ENCODE measurements at regions of chr2 and their contacts with region 1.

Region 1: GRCh38 chr2:43226558-43226954 is at the start of gene ZFP36L2:
- DNase-seq: peak; percentile 97
- H3K4me3 ChIP-seq: peak within 1 kb of the TSS; percentile 98
- H3K27ac ChIP-seq: peak within 1 kb of the TSS; percentile 98
- H3K4me1 ChIP-seq: peaks cover 39% of the 10 kb centered on the region
- H3K27me3 ChIP-seq: no peaks in the 10 kb centered on the region
- CTCF ChIP-seq: no peak
- total RNA-seq, gene ZFP36L2: 20.4 and 23.4 TPM in 2 replicates

Region 2: DNA sequence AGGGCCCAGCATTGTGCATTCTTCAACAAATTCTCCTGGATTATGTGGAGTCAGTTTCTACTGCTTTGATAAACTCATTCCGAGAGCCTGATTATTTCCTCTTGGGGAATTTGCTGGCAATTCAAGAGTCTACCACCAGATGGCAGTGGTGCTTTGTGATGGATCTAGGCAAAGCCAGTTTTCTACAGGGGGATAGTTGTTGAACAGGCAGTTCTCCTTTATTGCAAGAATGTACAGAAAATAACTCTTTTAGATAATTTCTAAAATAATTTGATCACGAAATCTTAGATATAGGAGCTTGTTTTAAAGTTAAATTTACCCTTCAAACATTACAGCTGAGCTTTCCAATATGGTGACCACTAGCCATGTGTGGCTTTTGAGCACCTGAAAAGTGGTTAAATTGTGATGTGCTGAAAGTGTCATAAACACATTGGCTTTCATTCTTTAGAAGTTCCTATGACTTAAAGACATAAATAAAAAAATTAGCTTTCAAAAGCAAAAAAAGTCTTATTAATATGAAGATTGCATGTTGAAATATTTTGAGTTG is 367.5 kb before region 1 on chr2:
- CTCF ChIA-PET with region 1: no interaction called
- POLR2A ChIA-PET with region 1: no interaction called
- intact Hi-C with region 1: loop called (anchors 10 kb)
- DNase-seq: peak; percentile 84
- H3K4me3 ChIP-seq: no peak overlapping the region
- H3K27ac ChIP-seq: no peak overlapping the region
- H3K4me1 ChIP-seq: no peaks in the 10 kb centered on the region
- H3K27me3 ChIP-seq: no peaks in the 10 kb centered on the region
- CTCF ChIP-seq: peak; percentile 94

Region 3: GRCh38 chr2:42974721-42975717 is 251.5 kb before region 1 on chr2:
- CTCF ChIA-PET with region 1: interaction called, 14 read pairs
- POLR2A ChIA-PET with region 1: no interaction called
- intact Hi-C with region 1: loop called (anchors 1 kb)
- DNase-seq: peak; percentile 76
- H3K4me3 ChIP-seq: peak overlapping the region; percentile 41
- H3K27ac ChIP-seq: no peak overlapping the region
- H3K4me1 ChIP-seq: no peaks in the 10 kb centered on the region
- H3K27me3 ChIP-seq: no peaks in the 10 kb centered on the region
- CTCF ChIP-seq: peak; percentile 95

Region 4: DNA sequence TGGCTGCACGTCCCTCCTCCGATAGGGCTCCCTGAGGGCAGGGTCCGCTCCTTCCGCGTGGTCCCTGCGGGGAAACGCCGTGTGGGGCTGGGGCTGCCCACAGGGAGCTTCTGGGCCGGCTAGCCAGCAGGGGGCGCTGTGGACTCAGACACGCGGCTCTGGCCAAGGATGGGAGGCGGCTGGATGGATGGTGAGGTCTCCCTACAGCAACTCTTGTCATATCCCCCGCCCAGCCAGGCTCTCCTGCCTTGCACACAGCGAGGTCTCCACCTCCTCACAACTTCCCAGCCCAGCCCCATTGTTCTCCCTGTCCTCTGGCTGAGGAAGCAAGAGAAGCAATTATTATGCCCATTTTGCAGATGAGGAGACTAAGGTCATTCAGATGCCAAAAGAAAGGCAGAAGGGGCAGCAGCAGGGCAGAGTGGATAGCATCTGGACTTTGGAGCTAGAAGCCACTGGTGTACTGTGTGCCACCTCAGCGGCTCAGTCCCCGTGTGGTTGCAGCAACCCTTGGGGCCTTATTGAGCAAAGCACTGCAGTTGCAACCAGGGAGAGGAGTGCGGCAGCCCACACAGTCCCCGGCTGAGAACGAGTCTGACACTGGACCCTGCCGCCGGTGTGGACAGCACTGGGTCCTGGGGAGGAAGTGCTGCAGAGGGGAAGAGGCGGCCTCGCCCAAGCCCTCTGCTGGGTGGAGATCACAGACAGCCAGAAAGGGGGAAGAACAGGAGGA is 99.2 kb before region 1 on chr2:
- CTCF ChIA-PET with region 1: no interaction called
- POLR2A ChIA-PET with region 1: no interaction called
- intact Hi-C with region 1: loop called (anchors 2 kb)
- DNase-seq: peak; percentile 68
- H3K4me3 ChIP-seq: no peak overlapping the region
- H3K27ac ChIP-seq: no peak overlapping the region
- H3K4me1 ChIP-seq: no peaks in the 10 kb centered on the region
- H3K27me3 ChIP-seq: no peaks in the 10 kb centered on the region
- CTCF ChIP-seq: peak; percentile 82

Region 5: GRCh38 chr2:43312755-43313641 is 86.4 kb after region 1 on chr2:
- CTCF ChIA-PET with region 1: no interaction called
- POLR2A ChIA-PET with region 1: no interaction called
- intact Hi-C with region 1: no loop called
- DNase-seq: no peak
- H3K4me3 ChIP-seq: no peak overlapping the region
- H3K27ac ChIP-seq: no peak overlapping the region
- H3K4me1 ChIP-seq: no peaks in the 10 kb centered on the region
- H3K27me3 ChIP-seq: no peaks in the 10 kb centered on the region
- CTCF ChIP-seq: no peak

Region 6: GRCh38 chr2:43484323-43484930 is 257.9 kb after region 1 on chr2:
- CTCF ChIA-PET with region 1: interaction called, 6 read pairs
- POLR2A ChIA-PET with region 1: no interaction called
- intact Hi-C with region 1: loop called (anchors 2 kb)
- DNase-seq: peak; percentile 85
- H3K4me3 ChIP-seq: no peak overlapping the region
- H3K27ac ChIP-seq: no peak overlapping the region
- H3K4me1 ChIP-seq: no peaks in the 10 kb centered on the region
- H3K27me3 ChIP-seq: no peaks in the 10 kb centered on the region
- CTCF ChIP-seq: peak; percentile 70